ENCODE measurements at regions of chr3 and their contacts with region 1.

Region 1: GRCh38 chr3:79521238-79521848 is 246.5 kb downstream of the ROBO1 start:
- DNase-seq: peak; percentile 84
- ATAC-seq: peak; percentile 72
- H3K4me3 ChIP-seq: peak overlapping the region; percentile 33; the same call in 1 of the 2 replicates
- H3K27ac ChIP-seq: no peak overlapping the region
- H3K4me1 ChIP-seq: no peaks in the 10 kb centered on the region; the same call in 1 of the 2 replicates
- H3K27me3 ChIP-seq: no peaks in the 10 kb centered on the region
- CTCF ChIP-seq: peak; percentile 83

Region 2: GRCh38 chr3:79534727-79535126 is 13.4 kb after region 1 on chr3:
- CTCF ChIA-PET with region 1: no interaction called
- POLR2A ChIA-PET with region 1: no interaction called
- intact Hi-C with region 1: no loop called
- DNase-seq: peak; percentile 80
- ATAC-seq: peak; percentile 86
- H3K4me3 ChIP-seq: no peak overlapping the region
- H3K27ac ChIP-seq: peak overlapping the region; percentile 67
- H3K4me1 ChIP-seq: peaks cover 46% of the 10 kb centered on the region
- H3K27me3 ChIP-seq: no peaks in the 10 kb centered on the region
- CTCF ChIP-seq: no peak

Region 3: GRCh38 chr3:79690072-79690471 is 168.7 kb after region 1 on chr3:
- CTCF ChIA-PET with region 1: no interaction called
- POLR2A ChIA-PET with region 1: no interaction called
- intact Hi-C with region 1: no loop called
- DNase-seq: no peak
- ATAC-seq: no peak
- H3K4me3 ChIP-seq: no peak overlapping the region
- H3K27ac ChIP-seq: no peak overlapping the region
- H3K4me1 ChIP-seq: no peaks in the 10 kb centered on the region
- H3K27me3 ChIP-seq: no peaks in the 10 kb centered on the region
- CTCF ChIP-seq: no peak

Region 4: DNA sequence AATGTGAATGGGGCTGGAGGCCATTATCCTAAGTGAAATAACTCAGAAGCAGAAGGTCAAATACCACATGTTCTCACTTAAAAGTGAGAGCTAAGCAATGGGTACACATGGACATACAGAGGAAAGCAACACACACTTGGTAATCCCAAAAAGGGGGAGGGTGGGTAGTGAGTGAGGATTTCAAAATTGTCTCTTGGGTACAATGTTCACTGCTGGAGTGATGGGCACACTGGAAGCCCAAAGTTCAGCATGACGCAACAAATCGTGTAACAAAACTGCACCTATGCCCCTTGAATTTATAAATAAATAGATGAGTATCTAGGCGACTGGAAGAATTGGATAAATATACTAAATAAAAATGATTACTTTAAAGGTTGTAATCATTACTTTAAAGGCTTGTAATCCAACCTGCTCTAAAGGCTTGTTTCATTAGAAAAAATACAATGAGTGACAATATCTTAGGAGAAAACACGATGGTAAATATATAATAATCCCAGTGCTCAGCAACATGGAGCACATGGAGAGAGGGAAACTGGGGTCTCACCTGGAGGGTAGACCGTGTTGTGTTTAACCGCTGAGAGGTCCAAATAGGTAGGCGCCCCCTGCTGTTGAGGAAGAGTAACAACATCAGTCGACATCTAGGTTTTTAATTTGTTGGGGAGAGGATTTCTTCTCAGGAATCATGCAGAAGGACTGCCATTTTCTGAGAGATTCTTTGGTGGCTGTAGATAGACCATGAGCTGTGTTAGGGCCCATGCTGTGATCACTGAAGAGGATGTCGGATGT is 325.0 kb after region 1 on chr3:
- CTCF ChIA-PET with region 1: interaction called, 11 read pairs
- POLR2A ChIA-PET with region 1: no interaction called
- intact Hi-C with region 1: no loop called
- DNase-seq: no peak
- ATAC-seq: no peak
- H3K4me3 ChIP-seq: no peak overlapping the region
- H3K27ac ChIP-seq: no peak overlapping the region
- H3K4me1 ChIP-seq: no peaks in the 10 kb centered on the region
- H3K27me3 ChIP-seq: no peaks in the 10 kb centered on the region
- CTCF ChIP-seq: peak; percentile 66

Region 5: GRCh38 chr3:80060664-80061063 is 539.3 kb after region 1 on chr3:
- CTCF ChIA-PET with region 1: no interaction called
- POLR2A ChIA-PET with region 1: no interaction called
- intact Hi-C with region 1: loop called (anchors 2 kb)
- DNase-seq: peak; percentile 46
- ATAC-seq: peak; percentile 45; the same call in 1 of the 2 replicates
- H3K4me3 ChIP-seq: no peak overlapping the region
- H3K27ac ChIP-seq: no peak overlapping the region
- H3K4me1 ChIP-seq: no peaks in the 10 kb centered on the region
- H3K27me3 ChIP-seq: no peaks in the 10 kb centered on the region
- CTCF ChIP-seq: peak; percentile 49

Region 6: DNA sequence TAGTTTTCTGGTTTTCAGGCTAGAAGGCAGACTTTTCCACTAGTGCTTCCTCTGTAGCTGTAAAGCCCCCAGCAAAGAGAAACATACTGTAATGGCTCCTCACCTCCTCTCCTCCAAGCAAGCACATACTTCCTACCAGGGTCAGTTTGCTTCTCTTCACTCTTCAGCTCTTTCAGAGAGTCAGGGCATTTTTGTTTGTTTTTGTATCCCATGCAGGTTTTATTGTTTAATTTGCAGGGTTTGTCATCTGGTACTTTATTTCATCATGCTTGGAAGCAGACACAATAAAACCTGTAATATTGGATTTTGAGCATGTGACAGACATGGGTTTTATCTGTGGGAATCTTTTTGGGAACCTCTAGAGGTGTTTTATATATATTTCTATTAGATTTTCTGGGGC is 999.7 kb after region 1 on chr3:
- CTCF ChIA-PET with region 1: no interaction called
- POLR2A ChIA-PET with region 1: no interaction called
- intact Hi-C with region 1: loop called (anchors 5 kb)
- DNase-seq: peak; percentile 65
- ATAC-seq: peak; percentile 85
- H3K4me3 ChIP-seq: no peak overlapping the region
- H3K27ac ChIP-seq: no peak overlapping the region
- H3K4me1 ChIP-seq: peaks cover 16% of the 10 kb centered on the region
- H3K27me3 ChIP-seq: no peaks in the 10 kb centered on the region
- CTCF ChIP-seq: no peak

Region 7: GRCh38 chr3:80688814-80689213 is 1167.5 kb after region 1 on chr3:
- CTCF ChIA-PET with region 1: no interaction called
- POLR2A ChIA-PET with region 1: no interaction called
- intact Hi-C with region 1: loop called (anchors 1 kb)
- DNase-seq: peak; percentile 57
- ATAC-seq: peak; percentile 57
- H3K4me3 ChIP-seq: no peak overlapping the region
- H3K27ac ChIP-seq: no peak overlapping the region
- H3K4me1 ChIP-seq: no peaks in the 10 kb centered on the region
- H3K27me3 ChIP-seq: no peaks in the 10 kb centered on the region
- CTCF ChIP-seq: peak; percentile 55